ENCODE measurements at regions of chr13 and their contacts with region 1.

Region 1: GRCh38 chr13:26895081-26895807 is 134.7 kb upstream of the GPR12 start:
- DNase-seq: no peak
- ATAC-seq: no peak
- H3K4me3 Mint-ChIP-seq: no peak overlapping the region
- H3K27ac Mint-ChIP-seq: no peak overlapping the region
- H3K4me1 Mint-ChIP-seq: no peaks in the 10 kb centered on the region
- H3K27me3 Mint-ChIP-seq: peaks cover 12% of the 10 kb centered on the region

Region 2: DNA sequence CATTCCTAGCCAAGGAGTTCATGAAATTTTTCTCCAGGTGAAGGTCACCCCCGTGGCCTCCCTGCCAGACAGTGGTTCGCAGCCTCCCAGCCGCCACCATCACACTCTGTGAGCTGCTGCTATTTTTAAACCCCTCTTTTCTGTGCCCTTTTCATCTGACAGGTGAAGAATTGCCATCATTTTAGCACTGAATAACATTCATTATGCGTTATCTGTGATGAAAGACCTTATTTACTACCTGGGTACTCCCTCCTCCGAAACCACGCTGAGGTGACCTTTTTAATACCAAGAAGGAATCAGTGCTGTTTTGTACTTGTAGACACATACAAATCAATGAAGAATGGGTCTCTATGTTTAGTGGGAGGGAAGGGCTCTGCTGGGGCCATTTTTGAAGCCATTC is 14.2 kb after region 1 on chr13:
- CTCF ChIA-PET with region 1: interaction called, 14 read pairs
- POLR2A ChIA-PET with region 1: no interaction called
- intact Hi-C with region 1: no loop called
- DNase-seq: no peak
- ATAC-seq: no peak
- H3K4me3 Mint-ChIP-seq: no peak overlapping the region
- H3K27ac Mint-ChIP-seq: no peak overlapping the region
- H3K4me1 Mint-ChIP-seq: peaks cover under 1% of the 10 kb centered on the region
- H3K27me3 Mint-ChIP-seq: peaks cover 14% of the 10 kb centered on the region